ENCODE measurements at regions of chr11 and their contacts with region 1.

Region 1: DNA sequence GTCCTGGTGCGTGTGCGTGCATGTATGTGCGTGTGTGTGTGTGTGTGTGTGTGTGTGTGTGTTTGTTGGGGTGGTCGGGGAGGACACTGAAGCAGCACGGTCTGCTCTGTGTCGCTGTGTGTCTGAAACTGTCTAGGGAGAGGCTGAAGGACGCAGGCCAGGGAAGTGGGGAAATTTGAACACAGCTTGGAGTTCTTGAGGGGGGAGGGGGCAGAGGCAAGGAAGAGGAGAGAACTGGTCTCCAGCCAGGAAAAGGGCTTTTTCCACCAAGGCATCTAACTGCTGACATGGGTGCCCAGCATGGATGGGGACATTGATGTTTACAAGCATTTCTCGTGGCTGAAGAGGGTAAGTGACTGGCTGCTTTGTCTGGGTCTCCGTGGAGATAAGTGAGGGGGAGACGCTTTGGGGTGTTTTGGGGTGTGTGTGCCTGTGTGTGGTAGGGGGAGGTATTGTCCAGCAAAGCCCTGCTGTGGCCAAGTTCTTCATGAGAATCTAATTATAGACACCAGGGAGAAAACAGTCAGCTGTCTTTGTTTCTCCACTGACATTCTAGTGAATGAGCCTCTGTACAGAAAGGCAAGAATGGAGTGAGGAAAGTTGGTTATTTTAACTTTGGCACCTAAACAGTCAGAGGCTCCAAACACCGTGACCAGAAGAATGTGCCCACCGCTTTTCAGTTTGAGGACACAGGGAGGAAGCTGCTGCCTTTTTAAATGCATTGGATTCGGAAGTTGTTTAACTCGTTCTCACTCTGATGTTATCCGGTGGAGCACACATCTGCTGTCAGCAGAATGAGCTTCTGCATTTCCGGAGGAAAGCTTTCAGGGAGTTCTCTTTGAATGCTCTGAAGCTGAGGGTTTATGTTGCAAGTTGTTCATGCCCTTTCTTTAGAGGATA is 63.7 kb downstream of the PPFIBP2 start:
- DNase-seq: peak; percentile 39
- H3K4me3 Mint-ChIP-seq: peak overlapping the region; percentile 58
- H3K27ac Mint-ChIP-seq: peak overlapping the region; percentile 89
- H3K4me1 Mint-ChIP-seq: peaks cover 56% of the 10 kb centered on the region
- H3K27me3 Mint-ChIP-seq: peaks cover 13% of the 10 kb centered on the region

Region 2: GRCh38 chr11:7592711-7593110 is 15.2 kb after region 1 on chr11:
- CTCF ChIA-PET with region 1: interaction called, 10 read pairs
- POLR2A ChIA-PET with region 1: interaction called, 4 read pairs
- DNase-seq: peak; percentile 32
- H3K4me3 Mint-ChIP-seq: no peak overlapping the region
- H3K27ac Mint-ChIP-seq: peak overlapping the region; percentile 27
- H3K4me1 Mint-ChIP-seq: peaks cover 23% of the 10 kb centered on the region
- H3K27me3 Mint-ChIP-seq: no peaks in the 10 kb centered on the region

Region 3: GRCh38 chr11:7612661-7613393 is 35.3 kb after region 1 on chr11:
- CTCF ChIA-PET with region 1: no interaction called
- POLR2A ChIA-PET with region 1: no interaction called
- DNase-seq: no peak
- H3K4me3 Mint-ChIP-seq: no peak overlapping the region
- H3K27ac Mint-ChIP-seq: no peak overlapping the region
- H3K4me1 Mint-ChIP-seq: no peaks in the 10 kb centered on the region
- H3K27me3 Mint-ChIP-seq: no peaks in the 10 kb centered on the region

Measured in activated CD4-positive, alpha-beta memory T cell treated with anti-CD3 and anti-CD28 coated beads, Interleukin-2, amount 10 ng/mL, durations not matched to agents 7 days and 5 days (primary cell).